WTC11 (cell line): ENCODE measurements at regions of chr2 and their contacts with region 1.

Region 1: DNA sequence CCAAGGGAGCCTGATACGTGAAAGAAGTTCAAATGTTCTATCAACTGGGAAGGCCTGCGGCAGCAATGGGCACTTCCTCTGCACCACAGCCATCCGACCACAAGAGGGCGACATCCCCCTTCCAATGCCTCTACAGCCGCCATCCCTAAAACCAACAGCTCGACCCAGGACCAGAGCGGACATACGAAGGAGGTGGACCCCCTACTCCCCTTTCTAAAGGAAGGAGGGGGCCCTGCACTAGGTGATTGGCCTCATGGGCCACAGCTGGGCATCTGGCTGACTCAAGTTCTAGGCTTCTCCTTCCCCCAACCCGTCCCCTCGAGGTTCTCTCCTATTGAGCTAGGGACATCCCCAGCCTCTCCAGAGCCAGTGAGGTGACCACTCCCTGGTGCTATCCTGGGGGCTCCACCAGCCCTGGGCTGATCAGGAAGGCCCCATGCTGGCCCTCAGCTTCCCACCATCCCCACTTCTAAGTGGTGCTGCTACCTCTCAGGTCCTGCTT is 217.2 kb downstream of the TNS1 start:
- DNase-seq: peak; percentile 87
- ATAC-seq: peak; percentile 87
- H3K4me3 Mint-ChIP-seq: no peak overlapping the region
- H3K27ac Mint-ChIP-seq: no peak overlapping the region
- H3K4me1 Mint-ChIP-seq: peaks cover 13% of the 10 kb centered on the region
- H3K27me3 Mint-ChIP-seq: peaks cover 15% of the 10 kb centered on the region
- CTCF ChIP-seq: peak; percentile 97

Region 2: DNA sequence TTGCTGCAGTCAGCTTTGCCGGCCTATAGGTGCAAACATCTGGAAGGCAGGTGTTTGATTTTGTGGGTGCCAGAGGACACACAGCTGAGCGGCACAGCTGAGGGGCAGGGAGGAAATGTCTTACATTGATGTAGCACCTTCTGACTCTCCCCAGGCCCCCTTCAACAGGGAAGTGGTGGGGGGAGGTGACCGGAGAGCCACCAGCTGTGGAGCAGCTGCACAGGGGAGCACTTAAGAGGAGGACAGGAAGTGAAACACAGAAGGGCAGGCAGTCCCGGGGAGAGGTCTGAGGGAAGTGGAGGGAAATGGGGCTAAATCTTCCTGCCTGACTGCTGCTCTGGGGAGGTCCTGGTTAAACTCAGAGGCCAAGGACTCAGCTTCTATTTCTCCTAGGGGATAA is 191.9 kb before region 1 on chr2:
- CTCF ChIA-PET with region 1: no interaction called
- POLR2A ChIA-PET with region 1: no interaction called
- DNase-seq: no peak
- ATAC-seq: peak; percentile 75
- H3K4me3 Mint-ChIP-seq: no peak overlapping the region
- H3K27ac Mint-ChIP-seq: no peak overlapping the region
- H3K4me1 Mint-ChIP-seq: peaks cover 40% of the 10 kb centered on the region
- H3K27me3 Mint-ChIP-seq: peaks cover 3% of the 10 kb centered on the region; the same call in 1 of the 2 replicates
- CTCF ChIP-seq: no peak

Region 3: GRCh38 chr2:217685255-217685605 is 100.4 kb before region 1 on chr2:
- CTCF ChIA-PET with region 1: no interaction called
- POLR2A ChIA-PET with region 1: no interaction called
- DNase-seq: peak; percentile 21
- ATAC-seq: peak; percentile 60
- H3K4me3 Mint-ChIP-seq: no peak overlapping the region
- H3K27ac Mint-ChIP-seq: no peak overlapping the region
- H3K4me1 Mint-ChIP-seq: peaks cover 9% of the 10 kb centered on the region
- H3K27me3 Mint-ChIP-seq: peaks cover 66% of the 10 kb centered on the region
- CTCF ChIP-seq: no peak

Region 4: GRCh38 chr2:217836901-217837491 is 51.4 kb after region 1 on chr2:
- CTCF ChIA-PET with region 1: interaction called, 16 read pairs
- POLR2A ChIA-PET with region 1: no interaction called
- DNase-seq: peak; percentile 63
- ATAC-seq: peak; percentile 83
- H3K4me3 Mint-ChIP-seq: no peak overlapping the region
- H3K27ac Mint-ChIP-seq: no peak overlapping the region
- H3K4me1 Mint-ChIP-seq: peaks cover 12% of the 10 kb centered on the region
- H3K27me3 Mint-ChIP-seq: no peaks in the 10 kb centered on the region
- CTCF ChIP-seq: no peak

Region 5: DNA sequence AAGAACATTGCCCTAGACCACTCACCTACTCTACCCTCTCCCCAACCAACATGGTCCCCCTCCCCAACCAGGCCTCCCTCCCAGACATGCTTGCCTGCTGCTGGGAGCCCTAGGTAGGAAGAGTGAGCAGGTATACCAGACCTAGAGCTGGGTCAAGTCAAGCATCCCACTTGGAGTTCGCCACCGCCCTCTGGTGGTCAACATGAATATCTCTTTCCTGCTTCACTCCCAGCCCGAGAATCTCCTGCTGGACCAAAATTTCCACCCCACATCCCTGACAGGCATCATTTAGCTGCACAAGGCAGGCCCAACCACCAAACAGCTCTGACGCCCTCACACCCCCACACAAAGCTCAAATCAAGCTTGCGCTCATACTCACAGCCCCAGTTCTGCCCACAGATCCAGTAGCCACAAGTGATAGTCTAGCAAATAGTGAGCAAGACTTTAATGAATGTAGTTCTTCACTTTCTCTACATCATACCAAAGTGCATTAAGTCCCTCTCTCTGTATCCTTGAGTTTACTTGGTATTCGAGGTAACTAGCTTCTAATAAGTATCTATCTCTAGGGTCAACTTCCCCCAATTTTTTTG is 101.2 kb after region 1 on chr2:
- CTCF ChIA-PET with region 1: interaction called, 83 read pairs
- POLR2A ChIA-PET with region 1: interaction called, 3 read pairs
- DNase-seq: peak; percentile 86
- ATAC-seq: peak; percentile 92
- H3K4me3 Mint-ChIP-seq: no peak overlapping the region
- H3K27ac Mint-ChIP-seq: no peak overlapping the region
- H3K4me1 Mint-ChIP-seq: no peaks in the 10 kb centered on the region
- H3K27me3 Mint-ChIP-seq: no peaks in the 10 kb centered on the region
- CTCF ChIP-seq: peak; percentile 86

Region 6: GRCh38 chr2:217943446-217944389 is 158.1 kb after region 1 on chr2:
- CTCF ChIA-PET with region 1: interaction called, 14 read pairs
- POLR2A ChIA-PET with region 1: no interaction called
- DNase-seq: peak; percentile 81
- ATAC-seq: peak; percentile 94
- H3K4me3 Mint-ChIP-seq: peak overlapping the region; percentile 46
- H3K27ac Mint-ChIP-seq: no peak overlapping the region
- H3K4me1 Mint-ChIP-seq: peaks cover 24% of the 10 kb centered on the region
- H3K27me3 Mint-ChIP-seq: no peaks in the 10 kb centered on the region; the same call in 1 of the 2 replicates
- CTCF ChIP-seq: no peak

Region 7: GRCh38 chr2:218033590-218034496 is 248.2 kb after region 1 on chr2:
- CTCF ChIA-PET with region 1: interaction called, 38 read pairs
- POLR2A ChIA-PET with region 1: no interaction called
- DNase-seq: peak; percentile 54
- ATAC-seq: peak; percentile 46
- H3K4me3 Mint-ChIP-seq: peak overlapping the region; percentile 68
- H3K27ac Mint-ChIP-seq: no peak overlapping the region
- H3K4me1 Mint-ChIP-seq: peaks cover 2% of the 10 kb centered on the region; the same call in 1 of the 2 replicates
- H3K27me3 Mint-ChIP-seq: peaks cover 30% of the 10 kb centered on the region
- CTCF ChIP-seq: no peak